ENCODE measurements at regions of chr3 and their contacts with region 1.

Region 1: DNA sequence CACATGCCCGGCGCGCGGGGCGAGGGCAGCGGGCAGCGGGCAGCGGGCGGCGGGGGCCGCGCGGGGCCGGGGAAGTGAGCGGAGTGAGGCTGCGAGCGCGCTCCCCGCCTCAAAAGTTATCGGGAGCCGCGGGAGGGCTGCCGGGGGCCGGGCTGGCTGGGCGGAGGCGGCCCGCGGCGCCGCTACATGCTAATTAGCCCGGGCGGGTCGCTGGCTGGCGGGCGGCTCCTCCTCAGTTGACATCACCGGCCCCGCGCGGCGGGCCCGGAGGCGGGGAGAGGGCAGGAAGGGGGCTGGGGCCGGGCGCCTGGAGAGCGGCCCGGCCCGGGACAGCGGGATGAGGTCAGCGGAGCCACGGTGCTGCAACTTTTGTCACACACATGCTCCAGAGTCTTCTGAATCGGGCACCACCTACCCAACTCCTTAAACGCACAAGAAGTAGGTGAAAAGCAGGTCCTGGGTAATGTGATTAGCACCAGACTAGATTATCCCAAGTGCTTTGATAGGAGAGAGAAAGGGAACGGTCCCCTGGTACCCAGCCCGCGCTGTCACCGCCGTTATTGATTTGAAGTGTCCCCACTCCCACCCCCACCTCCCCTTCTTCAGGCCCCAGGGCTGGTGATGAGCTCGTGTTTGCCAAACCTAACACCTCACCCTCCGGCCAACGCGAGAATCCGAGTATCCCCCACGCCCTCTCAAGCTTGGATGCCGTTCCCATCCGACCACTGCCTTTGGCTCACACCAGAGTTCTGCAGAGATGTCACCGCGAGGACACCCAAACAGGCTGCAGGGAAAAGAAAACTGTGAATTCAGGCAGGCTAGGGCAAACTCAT is at the start of gene HEG1:
- DNase-seq: peak; percentile 80
- H3K4me3 ChIP-seq: peak within 1 kb of the TSS; percentile 73 to 85 (median 82)
- H3K27ac ChIP-seq: peak within 1 kb of the TSS; percentile 84
- H3K4me1 ChIP-seq: peaks cover 50% of the 10 kb centered on the region
- H3K27me3 ChIP-seq: no peaks in the 10 kb centered on the region
- CTCF ChIP-seq: no peak
- POLR2A ChIP-seq: peak; percentile 42
- total RNA-seq, gene HEG1: 87.0 and 106 TPM in 2 replicates

Region 2: GRCh38 chr3:124768812-124769211 is 287.3 kb before region 1 on chr3:
- CTCF ChIA-PET with region 1: no interaction called
- POLR2A ChIA-PET with region 1: no interaction called
- dilution Hi-C with region 1: no loop called
- intact Hi-C with region 1: loop called (anchors 10 kb)
- DNase-seq: no peak
- H3K4me3 ChIP-seq: no peak overlapping the region
- H3K27ac ChIP-seq: no peak overlapping the region
- H3K4me1 ChIP-seq: peaks cover 31% of the 10 kb centered on the region
- H3K27me3 ChIP-seq: no peaks in the 10 kb centered on the region
- CTCF ChIP-seq: peak in 1 of 2 donors; percentile 26
- POLR2A ChIP-seq: no peak

Region 3: DNA sequence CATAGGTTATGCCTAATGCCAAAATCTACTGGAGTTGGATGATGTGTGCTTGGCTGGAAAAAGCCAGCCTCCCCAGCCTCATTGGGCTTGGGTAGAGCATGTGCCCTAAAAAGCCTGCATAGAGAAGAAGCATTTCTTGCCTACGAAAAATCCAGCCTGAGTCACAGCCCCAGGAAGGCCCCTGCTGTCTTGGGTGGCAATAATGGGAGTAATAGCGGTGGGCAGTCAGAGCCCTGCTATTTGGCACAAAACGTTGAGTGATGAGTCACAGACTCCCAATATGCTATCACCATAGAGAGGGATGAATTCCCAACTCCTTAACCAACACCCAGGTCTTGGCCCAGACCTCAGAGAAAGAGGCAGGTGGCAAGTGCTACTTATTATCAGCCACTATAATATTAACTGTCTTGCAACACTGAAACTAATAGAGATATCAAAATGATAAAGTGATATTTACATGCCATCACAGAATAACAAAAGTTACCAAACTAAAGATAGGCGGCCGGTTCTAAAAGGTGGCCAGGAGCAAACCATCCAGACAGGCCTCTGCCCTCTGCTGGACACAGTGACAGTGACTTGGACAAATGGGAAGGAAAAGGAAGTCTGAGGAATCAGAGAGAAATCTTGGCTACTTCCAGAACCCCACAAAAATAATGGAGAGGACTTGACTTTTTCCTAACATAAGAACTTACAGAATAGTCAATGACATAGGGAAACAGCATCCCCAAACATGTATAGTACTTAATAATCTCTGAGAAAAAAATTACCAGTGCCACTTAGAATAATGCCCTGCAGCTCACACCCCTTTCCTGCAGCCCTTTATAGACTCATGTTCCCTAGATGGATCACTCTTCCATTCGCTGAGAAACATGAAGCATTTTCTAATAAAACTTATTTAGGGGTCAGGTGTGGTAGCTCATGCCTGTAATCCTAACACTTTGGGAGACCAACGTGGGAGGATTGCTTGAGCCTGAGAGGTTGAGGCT is 69.7 kb before region 1 on chr3:
- CTCF ChIA-PET with region 1: no interaction called
- POLR2A ChIA-PET with region 1: no interaction called
- dilution Hi-C with region 1: no loop called
- intact Hi-C with region 1: loop called (anchors 2 kb)
- DNase-seq: peak; percentile 52
- H3K4me3 ChIP-seq: no peak overlapping the region
- H3K27ac ChIP-seq: peak overlapping the region; percentile 61
- H3K4me1 ChIP-seq: peaks cover 29% of the 10 kb centered on the region
- H3K27me3 ChIP-seq: no peaks in the 10 kb centered on the region
- CTCF ChIP-seq: peak; percentile 36 to 37
- POLR2A ChIP-seq: no peak

Region 4: GRCh38 chr3:125011941-125012340 is 44.2 kb before region 1 on chr3:
- CTCF ChIA-PET with region 1: interaction called, 7 read pairs
- POLR2A ChIA-PET with region 1: no interaction called
- dilution Hi-C with region 1: no loop called
- intact Hi-C with region 1: loop called (anchors 5 kb)
- DNase-seq: no peak
- H3K4me3 ChIP-seq: no peak overlapping the region
- H3K27ac ChIP-seq: no peak overlapping the region
- H3K4me1 ChIP-seq: no peaks in the 10 kb centered on the region
- H3K27me3 ChIP-seq: no peaks in the 10 kb centered on the region
- CTCF ChIP-seq: no peak
- POLR2A ChIP-seq: no peak

Region 5: DNA sequence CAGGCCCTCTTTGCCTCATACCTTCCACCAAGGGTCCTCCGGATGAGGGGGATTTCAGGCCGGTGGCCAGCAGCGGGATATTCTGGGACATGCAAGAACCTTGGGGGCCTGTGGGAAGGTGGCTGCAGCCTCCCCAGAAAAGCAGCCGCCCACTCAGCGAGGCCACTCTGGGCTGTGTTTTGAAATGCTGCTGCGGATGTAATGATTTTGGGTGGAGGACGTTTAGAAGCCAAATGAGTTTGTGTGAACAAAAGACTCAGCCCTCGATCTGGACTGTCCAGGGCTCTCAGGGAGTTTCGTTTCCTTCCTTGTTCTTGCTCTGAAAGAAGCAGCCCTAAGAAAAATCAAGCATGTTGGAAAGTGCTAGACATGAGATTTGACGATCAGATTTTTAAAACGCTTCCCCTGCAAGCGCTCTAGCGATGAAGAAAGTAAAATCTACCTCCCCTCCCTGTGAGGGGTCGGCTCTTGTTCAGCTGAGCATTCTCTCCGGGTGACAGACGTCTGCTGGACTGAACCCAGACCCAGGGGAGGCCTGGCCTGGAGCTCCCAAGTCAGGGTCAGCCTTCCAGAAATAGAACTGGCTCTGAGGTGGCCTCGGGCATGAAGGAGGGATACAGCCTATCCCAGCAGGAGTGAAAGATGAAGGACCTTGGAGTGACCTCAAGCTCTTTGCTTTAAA is 13.3 kb before region 1 on chr3:
- CTCF ChIA-PET with region 1: interaction called, 12 read pairs
- POLR2A ChIA-PET with region 1: interaction called, 4 read pairs
- dilution Hi-C with region 1: no loop called
- intact Hi-C with region 1: loop called (anchors 1 kb)
- DNase-seq: peak; percentile 64
- H3K4me3 ChIP-seq: no peak overlapping the region
- H3K27ac ChIP-seq: peak overlapping the region; percentile 77
- H3K4me1 ChIP-seq: peaks cover 56% of the 10 kb centered on the region
- H3K27me3 ChIP-seq: no peaks in the 10 kb centered on the region
- CTCF ChIP-seq: no peak
- POLR2A ChIP-seq: no peak

Region 6: GRCh38 chr3:125437631-125438435 is 381.7 kb after region 1 on chr3:
- CTCF ChIA-PET with region 1: interaction called, 3 read pairs
- POLR2A ChIA-PET with region 1: no interaction called
- dilution Hi-C with region 1: no loop called
- intact Hi-C with region 1: loop called (anchors 5 kb)
- DNase-seq: peak; percentile 54
- H3K4me3 ChIP-seq: no peak overlapping the region
- H3K27ac ChIP-seq: no peak overlapping the region
- H3K4me1 ChIP-seq: no peaks in the 10 kb centered on the region
- H3K27me3 ChIP-seq: no peaks in the 10 kb centered on the region
- CTCF ChIP-seq: peak; percentile 88 to 89
- POLR2A ChIP-seq: no peak

Measured in endothelial cell of umbilical vein (primary cell).